Right ventricle myocardium inferior (tissue), 1 donor: ENCODE measurements at regions of chr15 and their contacts with region 1.

Region 1: DNA sequence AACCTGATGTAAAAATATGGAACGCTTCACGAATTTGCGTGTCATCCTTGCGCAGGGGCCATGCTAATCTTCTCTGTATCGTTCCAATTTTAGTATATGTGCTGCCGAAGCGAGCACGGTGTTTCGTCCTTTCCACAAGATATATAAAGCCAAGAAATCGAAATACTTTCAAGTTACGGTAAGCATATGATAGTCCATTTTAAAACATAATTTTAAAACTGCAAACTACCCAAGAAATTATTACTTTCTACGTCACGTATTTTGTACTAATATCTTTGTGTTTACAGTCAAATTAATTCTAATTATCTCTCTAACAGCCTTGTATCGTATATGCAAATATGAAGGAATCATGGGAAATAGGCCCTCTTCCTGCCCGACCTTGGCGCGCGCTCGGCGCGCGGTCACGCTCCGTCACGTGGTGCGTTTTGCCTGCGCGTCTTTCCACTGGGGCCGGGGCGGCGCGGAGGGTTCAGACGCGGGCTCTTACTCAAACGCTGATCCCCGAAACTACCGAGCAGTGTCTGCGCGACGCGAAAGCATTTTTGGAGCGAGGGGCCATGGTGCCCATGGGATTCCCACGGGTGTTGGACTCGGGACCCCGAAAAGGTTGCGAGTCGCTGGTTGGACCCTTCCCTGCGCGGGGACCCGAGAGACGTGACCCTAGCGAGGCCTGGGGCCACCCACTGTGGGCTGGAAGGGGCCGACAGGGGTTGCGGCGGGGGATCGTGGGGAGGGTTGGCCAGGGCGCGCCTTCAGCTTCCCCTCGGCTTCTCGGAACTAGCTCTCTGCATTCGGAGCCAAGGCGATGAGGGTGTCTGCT is at the start of gene RNU6-1:
- DNase-seq: peak; percentile 97
- ATAC-seq: peak; percentile 94
- total RNA-seq, gene RNU6-1: not detected

Region 2: GRCh38 chr15:66946578-66947164 is 893.5 kb before region 1 on chr15:
- intact Hi-C with region 1: loop called (anchors 5 kb)
- DNase-seq: peak; percentile 81
- ATAC-seq: peak; percentile 59

Region 3: GRCh38 chr15:67456677-67457529 is 383.2 kb before region 1 on chr15:
- intact Hi-C with region 1: loop called (anchors 1 kb)
- DNase-seq: peak; percentile 85
- ATAC-seq: peak; percentile 81

Region 4: DNA sequence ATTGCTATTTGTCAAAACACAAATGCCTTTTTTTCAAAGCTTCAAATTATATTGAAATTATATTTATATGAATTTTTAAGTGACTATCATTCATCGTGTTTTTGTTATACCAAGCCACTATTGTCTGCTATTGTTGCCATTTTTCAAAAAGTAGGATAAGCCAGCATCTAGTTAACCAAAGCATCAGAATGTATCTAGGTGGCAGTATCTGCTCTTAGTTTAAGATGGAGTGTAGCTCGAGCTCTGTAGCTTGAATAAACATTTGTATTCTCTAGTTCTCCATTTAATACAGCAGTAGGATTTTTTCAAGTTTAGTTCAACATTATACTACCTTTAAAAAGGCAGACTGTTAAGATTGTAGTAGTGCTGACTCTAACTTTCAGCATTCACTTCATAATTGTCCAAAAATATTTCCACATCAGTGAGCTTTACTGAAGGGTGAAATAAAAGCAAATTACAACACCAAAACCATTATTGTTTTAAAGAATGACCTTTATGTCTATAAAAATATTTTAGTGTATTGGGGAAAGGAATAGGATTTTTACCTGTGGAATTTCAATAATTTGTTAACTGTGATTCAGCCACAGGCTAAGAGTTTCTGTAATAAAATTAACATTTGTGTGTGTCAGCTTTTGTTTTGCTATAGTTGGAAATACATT is 338.8 kb before region 1 on chr15:
- intact Hi-C with region 1: loop called (anchors 5 kb)
- DNase-seq: no peak
- ATAC-seq: no peak

Region 5: DNA sequence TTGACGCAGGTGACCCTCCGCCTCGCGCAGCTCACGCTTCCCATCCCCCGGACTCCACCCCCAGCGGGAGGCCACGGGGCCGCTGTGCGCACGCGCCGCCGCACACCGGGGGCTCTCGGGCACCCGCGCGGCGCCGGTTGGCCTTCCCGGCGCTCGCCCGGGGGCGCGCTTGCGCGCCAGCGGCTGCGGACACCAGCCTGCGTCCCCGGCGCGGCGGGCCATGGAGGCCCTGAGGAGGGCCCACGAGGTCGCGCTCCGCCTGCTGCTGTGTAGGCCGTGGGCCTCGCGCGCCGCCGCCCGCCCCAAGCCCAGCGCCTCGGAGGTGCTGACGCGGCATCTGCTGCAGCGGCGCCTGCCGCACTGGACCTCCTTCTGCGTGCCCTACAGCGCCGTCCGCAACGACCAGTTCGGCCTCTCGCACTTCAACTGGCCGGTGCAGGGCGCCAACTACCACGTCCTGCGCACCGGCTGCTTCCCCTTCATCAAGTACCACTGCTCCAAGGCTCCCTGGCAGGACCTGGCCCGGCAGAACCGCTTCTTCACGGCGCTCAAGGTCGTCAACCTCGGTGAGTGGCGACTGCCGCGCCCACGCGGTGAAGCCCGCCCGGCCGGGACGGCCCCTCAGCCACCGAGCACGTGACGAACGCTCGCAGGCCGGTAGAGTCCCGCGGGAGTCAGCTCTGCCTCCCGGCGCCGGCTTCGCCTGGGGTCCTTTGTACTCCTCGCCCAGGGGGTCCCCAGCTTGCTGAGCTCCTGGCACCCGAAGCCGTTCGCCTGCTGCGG is 318.9 kb before region 1 on chr15 and contains the start of gene C15orf61:
- intact Hi-C with region 1: loop called (anchors 5 kb)
- DNase-seq: peak; percentile 93
- ATAC-seq: peak; percentile 94
- total RNA-seq, gene C15orf61: 11.9 TPM

Region 6: DNA sequence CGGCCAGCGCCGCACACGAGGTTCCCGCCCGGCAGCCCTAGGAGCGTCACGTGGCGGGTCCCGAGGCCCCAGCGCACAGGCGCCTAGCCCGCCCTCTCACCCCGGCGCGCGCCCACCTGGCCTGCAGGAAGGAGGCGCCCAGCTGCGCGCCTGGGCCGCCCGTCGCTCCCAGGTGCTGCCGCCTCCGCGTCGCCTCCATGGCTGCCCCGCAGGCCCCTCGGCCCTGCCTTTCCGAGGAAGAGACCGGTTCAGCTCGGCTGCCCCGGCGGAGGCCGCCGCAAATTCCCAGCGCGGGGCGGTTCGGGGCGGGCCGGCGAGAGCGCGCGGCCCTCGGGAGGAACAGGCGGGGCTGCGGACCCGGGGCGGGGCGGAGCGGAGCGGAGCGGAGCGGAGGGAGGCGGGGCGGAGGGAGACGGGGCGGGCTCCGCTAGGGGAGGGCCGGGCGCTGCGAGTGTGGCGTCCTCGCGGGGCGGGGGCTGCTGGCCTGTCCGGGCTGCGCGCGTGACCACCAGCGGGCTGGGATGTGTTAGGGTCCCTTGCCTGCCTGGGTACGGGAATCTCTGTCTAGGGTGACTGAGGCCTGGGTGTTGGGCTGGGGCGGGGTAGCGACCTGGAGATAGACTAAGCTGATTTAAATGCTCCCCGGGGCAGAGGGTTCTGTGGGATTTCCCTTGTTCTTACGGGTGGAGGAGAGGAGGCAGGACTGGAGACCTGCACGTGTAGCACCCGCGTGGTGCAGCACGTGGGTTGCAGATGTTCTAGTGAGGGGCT is 389.4 kb after region 1 on chr15 and contains the start of gene CLN6:
- intact Hi-C with region 1: no loop called
- DNase-seq: peak; percentile 93
- ATAC-seq: peak; percentile 97
- total RNA-seq, gene CLN6: 7.7 TPM